ENCODE measurements at regions of chr9 and their contacts with region 1.

Region 1: DNA sequence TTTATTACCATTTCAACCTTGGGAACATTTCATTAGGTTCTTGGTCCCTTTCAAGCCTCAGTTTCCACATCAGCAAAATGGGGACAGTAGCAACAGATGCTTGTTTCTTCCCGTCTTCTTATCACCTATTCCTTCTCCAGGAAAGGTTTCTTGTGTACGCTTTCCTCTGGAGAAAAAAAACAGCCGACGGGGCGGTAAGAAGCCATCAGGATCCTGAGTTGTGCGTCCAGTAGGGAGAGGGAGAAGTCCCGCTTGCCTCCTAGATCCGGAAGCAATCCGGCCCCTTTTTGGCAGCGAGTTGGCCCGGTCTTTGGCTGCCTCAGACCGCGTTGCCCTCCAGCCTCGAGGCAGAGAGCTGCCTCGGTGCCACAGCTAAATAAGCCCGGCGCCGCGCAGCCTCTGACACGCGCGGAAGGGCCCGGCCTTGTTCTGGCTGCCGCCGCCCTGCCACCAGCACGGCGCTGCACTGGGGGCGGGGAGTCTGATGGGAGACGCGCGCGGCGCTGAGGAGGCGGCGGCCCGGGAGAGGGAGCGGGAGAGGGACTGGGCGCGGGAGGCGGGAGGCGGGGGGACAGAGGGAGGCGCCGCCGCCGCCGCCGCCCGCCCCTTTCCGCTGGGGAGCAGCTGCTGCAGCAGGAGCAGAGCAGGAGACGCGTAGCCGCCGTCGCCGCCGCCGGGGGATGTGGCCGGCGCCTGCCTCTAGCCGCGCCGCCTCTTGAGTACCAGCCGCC is at the start of gene SLC44A1:
- DNase-seq: peak; percentile 95
- H3K4me3 Mint-ChIP-seq: peak within 1 kb of the TSS; percentile 82
- H3K27ac Mint-ChIP-seq: peak within 1 kb of the TSS; percentile 60
- H3K4me1 Mint-ChIP-seq: peaks cover 16% of the 10 kb centered on the region
- H3K27me3 Mint-ChIP-seq: peaks cover 6% of the 10 kb centered on the region
- total RNA-seq, gene SLC44A1: 11.8 to 12.2 TPM

Region 2: DNA sequence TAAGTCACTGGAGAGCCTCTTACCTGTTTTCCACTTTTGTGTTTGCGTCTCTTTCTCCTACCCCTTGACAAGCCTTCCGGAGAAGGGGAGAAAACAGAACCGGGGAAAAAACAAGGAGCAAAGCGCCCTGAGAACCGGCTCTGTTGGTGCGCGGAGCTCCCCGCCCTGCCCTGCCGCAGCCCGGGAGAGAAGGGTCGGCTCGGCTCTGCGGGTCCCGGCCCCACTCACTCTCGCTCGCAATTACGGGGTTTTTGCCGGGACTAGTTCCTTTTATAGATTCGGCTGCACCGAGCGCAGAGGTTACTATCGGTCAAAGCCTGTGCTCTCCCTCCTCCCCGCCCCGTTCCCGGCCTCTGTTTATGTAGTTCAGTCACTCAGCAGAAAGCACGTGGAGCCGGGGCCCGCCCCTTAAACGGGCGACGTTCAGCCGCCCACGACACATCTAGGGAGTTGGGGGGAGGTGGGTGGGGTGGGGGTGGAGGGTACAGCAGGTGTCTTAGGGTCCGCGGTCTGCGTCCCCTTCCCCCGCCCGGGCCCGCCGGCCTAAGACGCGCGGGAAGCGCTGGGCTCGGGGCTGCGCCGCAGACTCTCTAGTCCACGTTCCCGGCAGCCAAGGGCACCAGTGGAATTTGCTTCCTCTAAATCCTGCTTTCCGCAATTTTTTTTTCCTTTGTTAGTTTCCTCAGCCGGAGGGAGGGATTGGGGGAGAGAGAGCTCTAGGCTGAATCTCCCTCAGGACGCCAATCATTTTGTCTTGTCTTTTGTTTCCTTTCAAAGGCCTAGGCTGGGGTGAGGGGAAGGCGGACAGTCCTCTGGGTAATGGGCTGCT is 316.0 kb before region 1 on chr9 and contains the start of gene ABCA1:
- CTCF ChIA-PET with region 1: interaction called, 9 read pairs
- POLR2A ChIA-PET with region 1: no interaction called
- intact Hi-C with region 1: loop called (anchors 5 kb)
- DNase-seq: peak; percentile 86
- H3K4me3 Mint-ChIP-seq: peak within 1 kb of the TSS; percentile 82
- H3K27ac Mint-ChIP-seq: peak within 1 kb of the TSS; percentile 49
- H3K4me1 Mint-ChIP-seq: peaks cover 9% of the 10 kb centered on the region
- H3K27me3 Mint-ChIP-seq: peaks cover 12% of the 10 kb centered on the region
- total RNA-seq, gene ABCA1: 6.1 TPM

Region 3: GRCh38 chr9:105259731-105260612 is 15.8 kb after region 1 on chr9:
- CTCF ChIA-PET with region 1: interaction called, 3 read pairs
- POLR2A ChIA-PET with region 1: interaction called, 3 read pairs
- intact Hi-C with region 1: loop called (anchors 2 kb)
- DNase-seq: no peak
- H3K4me3 Mint-ChIP-seq: no peak overlapping the region
- H3K27ac Mint-ChIP-seq: no peak overlapping the region
- H3K4me1 Mint-ChIP-seq: peaks cover 30% of the 10 kb centered on the region
- H3K27me3 Mint-ChIP-seq: no peaks in the 10 kb centered on the region

Region 4: GRCh38 chr9:105405514-105406131 is 161.5 kb after region 1 on chr9:
- CTCF ChIA-PET with region 1: no interaction called
- POLR2A ChIA-PET with region 1: interaction called, 7 read pairs
- intact Hi-C with region 1: loop called (anchors 2 kb)
- DNase-seq: peak; percentile 71
- H3K4me3 Mint-ChIP-seq: peak overlapping the region; percentile 7
- H3K27ac Mint-ChIP-seq: peak overlapping the region; percentile 43
- H3K4me1 Mint-ChIP-seq: peaks cover 25% of the 10 kb centered on the region
- H3K27me3 Mint-ChIP-seq: peaks cover 70% of the 10 kb centered on the region

Region 5: DNA sequence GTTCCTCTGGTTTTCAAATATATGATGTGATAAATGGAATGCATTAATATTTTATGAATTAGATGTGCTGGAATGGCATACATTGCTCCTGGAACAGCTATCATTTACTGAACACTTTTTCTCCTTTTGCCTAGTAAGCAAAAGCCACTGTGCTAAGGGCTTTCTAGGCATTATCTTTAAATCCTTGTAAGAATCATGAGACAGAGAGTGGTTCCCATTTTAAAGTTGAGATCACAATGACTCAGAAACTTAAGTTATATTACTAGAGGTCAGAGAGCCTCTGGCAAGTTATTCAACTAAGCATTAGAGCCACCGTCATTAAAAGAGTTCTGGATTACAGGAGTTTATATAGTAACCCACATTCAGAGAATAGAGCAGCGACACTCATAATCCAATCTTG is 177.0 kb after region 1 on chr9:
- CTCF ChIA-PET with region 1: no interaction called
- POLR2A ChIA-PET with region 1: no interaction called
- intact Hi-C with region 1: no loop called
- DNase-seq: no peak
- H3K4me3 Mint-ChIP-seq: no peak overlapping the region
- H3K27ac Mint-ChIP-seq: no peak overlapping the region
- H3K4me1 Mint-ChIP-seq: no peaks in the 10 kb centered on the region
- H3K27me3 Mint-ChIP-seq: no peaks in the 10 kb centered on the region

Region 6: GRCh38 chr9:105447814-105448812 is 203.9 kb after region 1 on chr9 and contains the start of gene FSD1L:
- CTCF ChIA-PET with region 1: no interaction called
- POLR2A ChIA-PET with region 1: no interaction called
- intact Hi-C with region 1: loop called (anchors 1 kb)
- DNase-seq: peak; percentile 90
- H3K4me3 Mint-ChIP-seq: peak within 1 kb of the TSS; percentile 63
- H3K27ac Mint-ChIP-seq: peak within 1 kb of the TSS; percentile 49
- H3K4me1 Mint-ChIP-seq: peaks cover 13% of the 10 kb centered on the region
- H3K27me3 Mint-ChIP-seq: no peaks in the 10 kb centered on the region
- total RNA-seq, gene FSD1L: 3.2 to 3.6 TPM

Region 7: GRCh38 chr9:105694190-105694847 is 450.2 kb after region 1 on chr9 and contains the start of gene TMEM38B:
- CTCF ChIA-PET with region 1: no interaction called
- POLR2A ChIA-PET with region 1: no interaction called
- intact Hi-C with region 1: loop called (anchors 10 kb)
- DNase-seq: peak; percentile 82
- H3K4me3 Mint-ChIP-seq: peak within 1 kb of the TSS; percentile 80
- H3K27ac Mint-ChIP-seq: peak within 1 kb of the TSS; percentile 26
- H3K4me1 Mint-ChIP-seq: peaks cover 25% of the 10 kb centered on the region
- H3K27me3 Mint-ChIP-seq: peaks cover 20% of the 10 kb centered on the region
- total RNA-seq, gene TMEM38B: 12.1 to 13.8 TPM

Region 8: DNA sequence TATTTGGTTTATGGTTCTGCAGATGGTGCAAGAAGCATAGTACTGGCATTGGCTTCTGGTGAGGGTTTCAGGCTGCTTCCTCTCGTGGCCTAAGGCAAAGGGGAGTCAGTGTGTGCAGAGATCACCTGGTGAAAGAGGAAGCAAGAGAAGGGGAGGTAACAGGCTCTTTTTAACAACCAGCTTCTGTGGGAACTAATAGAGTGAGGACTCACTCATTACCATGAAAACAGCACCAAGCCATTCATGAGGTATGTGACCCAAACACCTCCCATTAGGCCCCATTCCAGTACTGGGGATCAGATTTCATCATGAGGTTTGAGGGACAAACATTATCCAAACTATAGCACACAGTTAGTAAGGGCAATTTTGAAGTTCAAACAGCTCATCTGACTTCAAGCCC is 713.7 kb after region 1 on chr9:
- CTCF ChIA-PET with region 1: no interaction called
- POLR2A ChIA-PET with region 1: no interaction called
- intact Hi-C with region 1: no loop called
- DNase-seq: no peak
- H3K4me3 Mint-ChIP-seq: no peak overlapping the region
- H3K27ac Mint-ChIP-seq: no peak overlapping the region
- H3K4me1 Mint-ChIP-seq: no peaks in the 10 kb centered on the region
- H3K27me3 Mint-ChIP-seq: no peaks in the 10 kb centered on the region

Measured in activated CD4-positive, alpha-beta memory T cell treated with anti-CD3 and anti-CD28 coated beads for 36 hours (primary cell).